HepG2 (cell line): ENCODE measurements at regions of chr13 and their contacts with region 1.

Region 1: GRCh38 chr13:52968074-52968700 is 60.4 kb upstream of the OLFM4 start:
- DNase-seq: peak; percentile 60
- ATAC-seq: peak; percentile 100
- H3K4me3 ChIP-seq: no peak overlapping the region
- H3K27ac ChIP-seq: no peak overlapping the region
- H3K4me1 ChIP-seq: no peaks in the 10 kb centered on the region
- H3K27me3 ChIP-seq: no peaks in the 10 kb centered on the region; a peak in 1 of 5 replicates
- CTCF ChIP-seq: peak; percentile 93
- EP300 ChIP-seq: no peak
- POLR2A ChIP-seq: no peak
- RAD21 ChIP-seq: peak; percentile 65

Region 2: GRCh38 chr13:52862358-52863206 is 105.6 kb before region 1 on chr13:
- CTCF ChIA-PET with region 1: interaction called, 4 read pairs
- POLR2A ChIA-PET with region 1: no interaction called
- in situ Hi-C with region 1: no loop called
- intact Hi-C with region 1: loop called (anchors 1 kb)
- DNase-seq: peak; percentile 5
- ATAC-seq: peak; percentile 74
- H3K4me3 ChIP-seq: no peak overlapping the region
- H3K27ac ChIP-seq: no peak overlapping the region
- H3K4me1 ChIP-seq: no peaks in the 10 kb centered on the region
- H3K27me3 ChIP-seq: no peaks in the 10 kb centered on the region; a peak in 2 of 5 replicates
- CTCF ChIP-seq: peak; percentile 50
- EP300 ChIP-seq: no peak
- POLR2A ChIP-seq: no peak
- RAD21 ChIP-seq: no peak

Region 3: DNA sequence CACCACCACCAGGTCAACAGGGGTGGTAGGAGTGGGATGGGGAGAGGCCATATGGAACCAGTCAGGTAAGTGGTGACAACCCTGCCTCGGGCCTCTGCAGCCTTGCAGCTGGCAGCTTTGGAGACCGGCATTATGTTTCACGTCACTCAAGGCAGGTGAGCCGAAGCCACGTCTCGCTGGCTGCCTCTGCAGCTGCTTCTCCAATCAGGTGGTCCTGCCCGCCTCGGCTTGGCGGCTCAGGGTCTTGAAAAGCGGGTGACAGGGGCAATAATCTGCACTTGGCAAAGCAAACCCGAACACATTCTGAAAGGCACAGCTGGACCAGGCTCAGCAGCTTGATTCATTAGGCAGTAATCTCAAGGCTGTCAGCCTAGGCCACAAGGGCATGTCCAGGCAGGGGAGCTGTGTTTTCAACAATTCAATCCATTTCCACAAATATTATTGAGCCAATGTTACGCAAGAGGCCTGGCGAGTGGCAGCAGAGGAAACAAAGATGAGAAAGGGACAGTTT is 42.4 kb before region 1 on chr13:
- CTCF ChIA-PET with region 1: no interaction called
- POLR2A ChIA-PET with region 1: no interaction called
- in situ Hi-C with region 1: no loop called
- intact Hi-C with region 1: no loop called
- DNase-seq: no peak
- ATAC-seq: peak; percentile 41; the same call in 2 of the 3 replicates
- H3K4me3 ChIP-seq: no peak overlapping the region
- H3K27ac ChIP-seq: no peak overlapping the region
- H3K4me1 ChIP-seq: no peaks in the 10 kb centered on the region
- H3K27me3 ChIP-seq: peaks cover 0 to 3% of the 10 kb centered on the region in 2 experiments; a peak in 1 of 5 replicates
- CTCF ChIP-seq: no peak
- EP300 ChIP-seq: no peak
- POLR2A ChIP-seq: no peak
- RAD21 ChIP-seq: no peak